ENCODE measurements at regions of chr14 and their contacts with region 1.

Region 1: DNA sequence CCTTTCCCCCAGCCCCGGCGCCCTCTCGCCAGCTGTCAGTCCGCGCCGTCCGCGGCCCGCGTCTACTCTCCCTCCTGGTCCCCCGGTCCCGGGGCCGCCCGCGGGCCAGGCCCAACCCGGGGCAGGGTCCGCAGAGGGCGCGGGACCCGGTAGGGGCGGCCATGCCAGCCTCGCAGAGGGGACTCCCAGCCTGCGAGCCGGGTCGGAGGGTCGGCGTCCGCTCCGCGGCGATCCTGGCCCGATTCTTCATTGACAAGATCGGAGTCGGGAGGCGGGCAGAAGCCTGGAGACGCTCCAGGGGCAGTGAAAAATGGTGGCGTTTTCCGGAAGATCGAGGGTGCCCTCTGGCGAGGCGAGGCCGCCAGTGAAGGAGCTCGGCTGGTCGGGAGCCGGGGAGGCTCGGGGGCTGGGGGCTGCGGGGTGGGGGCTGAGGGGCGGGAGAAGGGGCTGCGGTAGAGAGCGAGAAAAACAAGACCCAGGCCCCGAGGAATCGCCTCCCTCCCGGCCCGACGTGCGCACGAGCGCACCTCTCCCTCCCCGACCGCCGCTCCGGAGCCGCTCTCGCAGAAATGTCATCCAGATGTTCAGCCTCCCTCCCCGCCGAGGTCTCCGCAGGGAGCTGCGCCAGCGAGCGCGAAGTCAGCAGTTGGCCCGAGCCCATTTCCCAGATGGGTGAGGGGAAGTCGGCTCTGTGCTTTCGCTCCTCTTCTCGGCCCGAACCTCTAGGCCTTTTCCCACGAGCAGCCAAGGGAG is 647 bp upstream of the TGFB3 start:
- DNase-seq: peak; percentile 75 to 81
- ATAC-seq: peak; percentile 67 to 75
- H3K4me3 ChIP-seq: peak overlapping the region; percentile 62 to 94 (median 74)
- H3K27ac ChIP-seq: peak overlapping the region; percentile 89 to 97 (median 94)
- H3K4me1 ChIP-seq: peaks cover 49 to 53% of the 10 kb centered on the region in 2 donors
- H3K27me3 ChIP-seq: no peaks in the 10 kb centered on the region
- CTCF ChIP-seq: peak in 4 of 5 experiments; percentile 59 to 89 (median 80)
- POLR2A ChIP-seq: no peak

Region 2: DNA sequence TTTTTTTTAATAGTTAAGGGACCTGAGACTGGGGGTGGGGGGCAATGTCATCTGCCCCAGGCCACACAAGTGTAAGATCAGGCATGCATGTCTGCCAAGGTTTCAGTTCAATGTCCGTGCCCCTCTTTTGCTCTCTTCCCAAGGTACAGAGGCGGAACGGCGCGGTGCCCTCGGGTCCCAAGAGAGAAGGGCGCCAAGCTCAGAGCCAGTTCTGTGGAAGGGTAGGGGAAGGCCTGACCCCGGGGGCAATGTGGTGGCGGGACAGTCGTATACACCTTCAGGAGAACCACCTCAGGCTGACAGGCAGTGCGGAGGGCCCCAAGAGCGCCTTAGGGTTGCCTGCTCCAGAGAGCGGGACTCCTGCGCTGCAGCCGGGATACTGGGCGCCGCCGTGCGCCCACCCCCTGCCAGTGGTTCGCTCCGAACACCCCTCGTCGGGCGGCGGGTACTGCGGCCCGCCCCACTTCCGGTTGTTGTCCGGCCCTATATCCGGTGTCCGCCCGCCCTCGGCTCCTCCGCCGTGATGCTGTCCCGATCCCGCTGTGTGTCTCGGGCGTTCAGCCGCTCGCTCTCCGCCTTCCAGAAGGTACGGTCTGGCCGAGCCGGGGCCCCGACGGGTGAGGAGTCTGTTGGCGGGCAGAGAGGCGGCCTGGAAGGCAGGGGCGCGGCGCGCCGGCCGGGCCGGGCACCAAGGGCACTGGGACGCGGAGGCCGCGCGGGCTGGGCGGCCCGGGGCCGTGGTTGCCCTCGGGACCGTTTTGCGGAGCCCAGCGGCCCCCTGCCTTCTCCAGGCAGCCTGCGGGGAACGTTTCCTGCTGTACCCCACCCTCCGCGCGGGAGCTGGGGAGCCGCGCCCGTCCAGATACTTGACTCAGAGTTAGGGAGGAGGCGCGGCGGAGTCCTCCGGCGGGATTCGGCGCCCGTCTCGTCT is 1100.7 kb before region 1 on chr14 and contains the start of gene DLST:
- in situ Hi-C with region 1: no loop called
- intact Hi-C with region 1: loop called (anchors 10 kb)
- DNase-seq: peak; percentile 68 to 77
- ATAC-seq: peak; percentile 90 to 91
- H3K4me3 ChIP-seq: peak within 1 kb of the TSS; percentile 79 to 94 (median 82)
- H3K27ac ChIP-seq: peak within 1 kb of the TSS; percentile 94 to 99 (median 95)
- H3K4me1 ChIP-seq: peaks cover 41 to 45% of the 10 kb centered on the region in 2 donors
- H3K27me3 ChIP-seq: no peaks in the 10 kb centered on the region
- CTCF ChIP-seq: peak in 1 of 5 experiments; percentile 7
- POLR2A ChIP-seq: peak; percentile 83 to 87
- total RNA-seq, gene DLST: 71.3 to 157 (median 105) TPM

Region 3: GRCh38 chr14:75660630-75661494 is 321.6 kb before region 1 on chr14 and contains the starts of genes ERG28 and TTLL5:
- in situ Hi-C with region 1: no loop called
- intact Hi-C with region 1: loop called (anchors 5 kb)
- DNase-seq: peak; percentile 98
- ATAC-seq: peak; percentile 97 to 98
- H3K4me3 ChIP-seq: peak within 1 kb of the TSS; percentile 72 to 98 (median 85)
- H3K27ac ChIP-seq: peak within 1 kb of the TSS; percentile 77 to 86 (median 82)
- H3K4me1 ChIP-seq: peaks cover 27 to 47% of the 10 kb centered on the region in 2 donors
- H3K27me3 ChIP-seq: no peaks in the 10 kb centered on the region
- CTCF ChIP-seq: no peak
- POLR2A ChIP-seq: peak; percentile 54 to 85
- total RNA-seq, gene ERG28: 3.7 to 6.4 (median 4.7) TPM
- total RNA-seq, gene TTLL5: 9.1 to 36.0 (median 16.4) TPM

Region 4: DNA sequence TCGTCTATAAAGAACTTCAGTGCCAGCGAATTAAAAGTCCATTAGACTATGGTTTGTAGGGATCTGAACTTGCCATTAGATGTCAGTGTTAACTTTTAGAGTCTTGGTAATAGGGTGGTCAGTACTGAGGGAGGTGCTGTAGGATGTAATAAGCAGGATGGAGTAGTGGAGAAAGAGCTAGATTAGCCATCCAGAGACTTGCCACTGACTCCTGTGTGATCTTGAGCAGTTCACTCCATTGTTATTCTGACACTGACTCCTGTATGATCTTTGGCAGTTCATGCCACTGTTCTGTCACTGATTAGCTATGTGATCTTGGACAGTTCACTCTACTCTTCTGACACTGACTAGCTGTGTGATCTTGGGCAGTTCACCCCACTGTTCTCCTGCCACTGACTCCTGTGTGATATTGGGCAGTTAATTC is 187.8 kb before region 1 on chr14:
- in situ Hi-C with region 1: loop called in 1 of 4 experiments (anchors 10 kb)
- intact Hi-C with region 1: loop called (anchors 2 kb)
- DNase-seq: no peak
- ATAC-seq: peak; percentile 58 to 89
- H3K4me3 ChIP-seq: no peak overlapping the region
- H3K27ac ChIP-seq: no peak overlapping the region
- H3K4me1 ChIP-seq: no peaks in the 10 kb centered on the region
- H3K27me3 ChIP-seq: no peaks in the 10 kb centered on the region
- CTCF ChIP-seq: peak in 1 of 5 experiments; percentile 15
- POLR2A ChIP-seq: no peak

Region 5: DNA sequence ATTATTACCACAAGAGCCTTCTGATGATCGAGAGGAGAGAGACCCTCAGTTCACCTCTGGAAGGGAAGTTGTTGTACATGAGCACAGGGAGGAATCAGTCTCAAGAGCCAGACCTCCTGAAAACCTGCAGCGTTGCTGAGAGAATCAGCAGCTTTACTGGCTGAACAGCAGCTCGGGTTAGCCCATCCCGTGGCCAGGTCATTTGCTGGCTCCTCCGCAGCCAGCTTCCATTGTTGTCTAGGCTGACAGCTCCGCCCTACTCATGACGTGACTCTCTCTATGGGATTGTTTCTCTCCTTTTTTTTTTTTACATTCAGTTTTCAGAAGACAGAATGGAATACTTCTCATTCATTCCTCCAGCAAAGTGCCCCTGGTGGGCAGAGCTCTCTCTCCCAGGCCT is 70.6 kb before region 1 on chr14:
- in situ Hi-C with region 1: loop called (anchors 5 to 10 kb)
- intact Hi-C with region 1: loop called (anchors 1 kb)
- DNase-seq: no peak
- ATAC-seq: no peak
- H3K4me3 ChIP-seq: no peak overlapping the region
- H3K27ac ChIP-seq: no peak overlapping the region
- H3K4me1 ChIP-seq: peaks cover 20 to 36% of the 10 kb centered on the region in 2 donors
- H3K27me3 ChIP-seq: no peaks in the 10 kb centered on the region
- CTCF ChIP-seq: no peak
- POLR2A ChIP-seq: no peak